Cardiac septum (tissue), 1 donor: ENCODE measurements at regions of chr7 and their contacts with region 1.

Region 1: GRCh38 chr7:107743567-107744344 is at the start of gene CBLL1:
- DNase-seq: peak; percentile 98
- total RNA-seq, gene CBLL1: 24.1 TPM

Region 2: DNA sequence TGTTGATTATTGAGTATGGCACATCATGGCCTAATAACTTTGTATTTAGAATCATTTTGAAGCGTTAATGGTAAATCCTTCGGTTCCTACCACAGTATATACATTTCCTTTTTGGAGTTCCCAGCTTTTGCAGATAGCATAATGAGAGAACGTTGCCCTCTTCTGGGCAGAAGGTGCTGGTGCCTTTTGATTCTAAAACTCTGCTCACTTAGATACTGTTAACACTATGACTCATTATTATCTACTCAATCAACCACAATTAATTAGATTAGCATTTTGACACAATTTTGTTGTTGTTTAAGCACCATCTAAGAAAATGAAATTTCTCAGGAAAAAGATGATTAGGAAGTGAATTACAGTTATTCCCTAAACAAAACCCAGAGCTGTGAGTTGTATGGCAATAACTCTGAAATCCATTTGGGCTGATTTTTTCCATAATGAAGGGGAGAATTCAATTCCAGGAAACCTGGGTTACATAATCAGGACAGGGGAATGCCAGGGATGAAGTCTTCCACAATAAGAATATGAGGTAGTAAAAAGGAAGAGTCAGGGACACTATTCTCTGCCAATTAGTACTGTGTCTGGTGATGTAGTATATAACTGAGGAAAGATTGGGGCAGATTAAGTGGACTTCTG is 135.8 kb after region 1 on chr7:
- intact Hi-C with region 1: loop called (anchors 5 kb)
- DNase-seq: no peak